Heart right ventricle (tissue), 16 donors: ENCODE measurements at regions of chr14 and their contacts with region 1.

Region 1: GRCh38 chr14:33964599-33965317 is 13.9 kb upstream of the EGLN3 start:
- DNase-seq: no peak
- ATAC-seq: no peak
- H3K4me3 ChIP-seq: no peak overlapping the region
- H3K27ac ChIP-seq: no peak overlapping the region
- H3K4me1 ChIP-seq: no peaks in the 10 kb centered on the region
- H3K27me3 ChIP-seq: no peaks in the 10 kb centered on the region
- CTCF ChIP-seq: no peak

Region 2: GRCh38 chr14:34030864-34031263 is 66.1 kb after region 1 on chr14:
- intact Hi-C with region 1: loop called in 3 of 10 experiments (anchors 5 to 10 kb)
- DNase-seq: peak; percentile 25 to 73
- ATAC-seq: peak; percentile 50 to 81 (median 66)
- H3K4me3 ChIP-seq: no peak overlapping the region
- H3K27ac ChIP-seq: peak overlapping the region in 7 of 10 donors; percentile 33 to 69 (median 57)
- H3K4me1 ChIP-seq: peaks cover 4 to 39% (median 22%) of the 10 kb centered on the region in 9 donors
- H3K27me3 ChIP-seq: no peaks in the 10 kb centered on the region
- CTCF ChIP-seq: no peak